ENCODE measurements at regions of chr9 and their contacts with region 1.

Region 1: GRCh38 chr9:113657703-113658544 is 194.4 kb downstream of the RGS3 start:
- DNase-seq: peak; percentile 83
- H3K4me3 ChIP-seq: no peak overlapping the region; a peak in 1 of 4 replicates
- H3K27ac ChIP-seq: no peak overlapping the region
- H3K4me1 ChIP-seq: peaks cover 11 to 15% of the 10 kb centered on the region in 2 experiments; a peak in 2 of 4 replicates
- H3K27me3 ChIP-seq: no peaks in the 10 kb centered on the region
- CTCF ChIP-seq: peak; percentile 90
- EP300 ChIP-seq: no peak
- RAD21 ChIP-seq: peak; percentile 99

Region 2: DNA sequence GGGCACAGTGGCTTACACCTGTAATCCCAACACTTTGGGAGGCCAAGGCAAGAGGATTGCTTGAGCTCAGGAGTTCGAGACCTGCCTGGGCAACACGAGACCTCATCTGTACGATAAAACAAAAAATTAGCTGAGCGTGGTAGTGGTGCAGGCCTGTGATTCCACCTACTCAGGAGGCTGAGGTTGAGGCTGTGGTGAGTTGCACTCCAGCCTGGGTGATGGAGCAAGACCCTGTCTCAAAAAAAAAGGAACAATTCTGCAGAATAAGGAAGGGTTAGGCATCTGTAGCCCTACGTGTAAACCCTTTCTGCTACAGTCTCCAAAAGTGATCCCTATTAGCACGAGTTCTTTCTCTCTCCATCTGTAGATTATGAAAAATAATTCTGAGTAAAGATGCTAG is 402.5 kb before region 1 on chr9:
- CTCF ChIA-PET with region 1: no interaction called
- POLR2A ChIA-PET with region 1: no interaction called
- DNase-seq: no peak
- H3K4me3 ChIP-seq: no peak overlapping the region
- H3K27ac ChIP-seq: peak overlapping the region in 1 of 2 experiments; percentile 91; a peak in 2 of 4 replicates
- H3K4me1 ChIP-seq: peaks cover 0 to 15% of the 10 kb centered on the region in 2 experiments; a peak in 1 of 4 replicates
- H3K27me3 ChIP-seq: no peaks in the 10 kb centered on the region
- CTCF ChIP-seq: no peak
- EP300 ChIP-seq: no peak
- RAD21 ChIP-seq: no peak

Region 3: GRCh38 chr9:113401027-113401792 is 256.7 kb before region 1 on chr9 and contains the start of gene ALAD:
- CTCF ChIA-PET with region 1: interaction called, 13 read pairs
- POLR2A ChIA-PET with region 1: no interaction called
- DNase-seq: peak; percentile 100
- H3K4me3 ChIP-seq: peak within 1 kb of the TSS; percentile 85 to 98
- H3K27ac ChIP-seq: peak within 1 kb of the TSS; percentile 46 to 62; a peak in 3 of 4 replicates
- H3K4me1 ChIP-seq: peaks cover 8 to 10% of the 10 kb centered on the region in 2 experiments; a peak in 1 of 4 replicates
- H3K27me3 ChIP-seq: no peaks in the 10 kb centered on the region
- CTCF ChIP-seq: peak; percentile 93
- EP300 ChIP-seq: no peak
- RAD21 ChIP-seq: peak; percentile 69
- polyA plus RNA-seq, gene ALAD: 10.7 and 11.8 TPM in 2 replicates

Region 4: DNA sequence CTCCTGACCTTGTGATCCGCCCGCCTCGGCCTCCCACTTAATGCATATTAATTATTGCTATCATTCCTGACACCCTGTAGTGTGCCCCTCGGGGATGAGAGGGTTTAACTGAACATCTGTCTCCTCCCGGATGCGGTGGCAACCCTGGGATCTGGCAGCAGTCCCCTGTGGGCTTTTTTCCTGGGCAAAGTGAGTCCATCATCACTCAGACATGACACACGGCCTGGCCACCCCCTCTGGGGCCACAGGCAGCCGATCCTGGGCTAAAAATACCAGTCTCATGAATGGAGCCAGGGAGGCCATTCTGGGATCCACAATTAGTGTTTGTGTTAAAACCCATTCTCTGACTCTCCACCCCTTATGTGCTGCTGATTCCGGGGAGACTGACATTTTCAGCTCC is 33.2 kb before region 1 on chr9:
- CTCF ChIA-PET with region 1: interaction called, 1,335 read pairs
- POLR2A ChIA-PET with region 1: no interaction called
- DNase-seq: peak; percentile 60
- H3K4me3 ChIP-seq: no peak overlapping the region
- H3K27ac ChIP-seq: peak overlapping the region; percentile 13 to 100; a peak in 3 of 4 replicates
- H3K4me1 ChIP-seq: peaks cover 29 to 33% of the 10 kb centered on the region in 2 experiments
- H3K27me3 ChIP-seq: no peaks in the 10 kb centered on the region
- CTCF ChIP-seq: no peak
- EP300 ChIP-seq: peak; percentile 53 to 63; a peak in 3 of 4 replicates
- RAD21 ChIP-seq: no peak

Region 5: DNA sequence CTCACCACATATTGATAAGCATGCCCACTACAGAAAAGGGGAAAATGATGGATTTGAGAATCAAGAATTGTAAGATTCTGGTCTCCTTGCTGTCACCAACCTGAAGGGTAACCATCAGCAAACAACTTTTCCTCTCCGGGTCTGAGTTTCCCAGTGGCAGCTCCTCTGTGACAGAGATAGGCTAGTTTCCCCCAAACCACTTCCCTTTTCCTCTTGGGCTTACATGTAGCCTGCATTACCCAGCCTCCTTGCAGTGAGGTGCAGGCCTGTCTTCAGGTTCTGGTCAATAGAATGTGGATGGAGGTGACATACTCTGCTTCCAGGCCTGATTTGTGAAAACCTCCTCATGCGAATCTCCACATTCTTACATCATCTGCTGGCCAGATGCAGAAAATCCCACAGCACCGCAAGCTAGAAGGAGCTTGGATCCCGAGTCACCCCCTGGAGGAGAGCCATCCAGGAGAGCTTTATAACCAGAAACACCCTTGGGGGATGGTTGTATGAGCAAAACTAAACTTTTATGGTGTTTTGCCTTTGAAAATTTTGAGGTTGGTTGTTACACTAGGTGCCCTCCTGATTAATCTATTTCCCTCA is 11.7 kb after region 1 on chr9:
- CTCF ChIA-PET with region 1: interaction called, 73 read pairs
- POLR2A ChIA-PET with region 1: no interaction called
- DNase-seq: no peak
- H3K4me3 ChIP-seq: no peak overlapping the region
- H3K27ac ChIP-seq: no peak overlapping the region
- H3K4me1 ChIP-seq: peaks cover 3 to 13% of the 10 kb centered on the region in 2 experiments
- H3K27me3 ChIP-seq: no peaks in the 10 kb centered on the region
- CTCF ChIP-seq: no peak
- EP300 ChIP-seq: no peak
- RAD21 ChIP-seq: no peak

Region 6: DNA sequence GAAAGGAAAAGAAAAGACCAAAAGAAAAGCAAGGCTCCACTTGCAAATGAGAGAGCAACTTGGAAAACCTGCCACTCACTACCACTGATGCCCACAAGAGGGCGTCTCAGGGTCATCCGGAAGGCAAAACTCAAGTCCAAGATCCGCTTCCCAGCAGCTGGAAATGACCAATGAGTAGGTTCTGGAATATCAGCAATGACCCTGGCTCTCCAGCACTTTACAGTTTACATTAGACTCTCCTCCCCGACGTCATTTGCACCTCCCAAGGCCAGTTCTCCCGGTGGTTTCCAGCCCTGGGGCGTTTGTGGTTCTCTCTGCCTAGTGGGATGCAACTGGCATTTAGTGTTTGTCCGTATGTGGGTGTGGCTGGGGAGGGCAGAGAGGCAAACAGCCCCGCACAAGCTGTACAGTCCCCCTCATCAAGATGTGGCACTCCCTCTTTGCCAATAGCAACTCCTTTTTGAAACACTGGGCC is 24.4 kb after region 1 on chr9:
- CTCF ChIA-PET with region 1: interaction called, 12 read pairs
- POLR2A ChIA-PET with region 1: no interaction called
- DNase-seq: peak; percentile 68
- H3K4me3 ChIP-seq: no peak overlapping the region; a peak in 1 of 4 replicates
- H3K27ac ChIP-seq: no peak overlapping the region
- H3K4me1 ChIP-seq: peaks cover 0 to 2% of the 10 kb centered on the region in 2 experiments; a peak in 1 of 4 replicates
- H3K27me3 ChIP-seq: peaks cover 8% of the 10 kb centered on the region; the same call in 1 of the 2 replicates
- CTCF ChIP-seq: peak; percentile 91
- EP300 ChIP-seq: no peak
- RAD21 ChIP-seq: peak; percentile 71

Region 7: GRCh38 chr9:113715086-113715485 is 57.2 kb after region 1 on chr9:
- CTCF ChIA-PET with region 1: no interaction called
- POLR2A ChIA-PET with region 1: no interaction called
- DNase-seq: no peak
- H3K4me3 ChIP-seq: no peak overlapping the region
- H3K27ac ChIP-seq: no peak overlapping the region
- H3K4me1 ChIP-seq: no peaks in the 10 kb centered on the region
- H3K27me3 ChIP-seq: no peaks in the 10 kb centered on the region; the same call in 1 of the 2 replicates
- CTCF ChIP-seq: no peak
- EP300 ChIP-seq: no peak
- RAD21 ChIP-seq: no peak

Measured in SK-N-SH (cell line).